ENCODE measurements at regions of chr12 and their contacts with region 1.

Region 1: DNA sequence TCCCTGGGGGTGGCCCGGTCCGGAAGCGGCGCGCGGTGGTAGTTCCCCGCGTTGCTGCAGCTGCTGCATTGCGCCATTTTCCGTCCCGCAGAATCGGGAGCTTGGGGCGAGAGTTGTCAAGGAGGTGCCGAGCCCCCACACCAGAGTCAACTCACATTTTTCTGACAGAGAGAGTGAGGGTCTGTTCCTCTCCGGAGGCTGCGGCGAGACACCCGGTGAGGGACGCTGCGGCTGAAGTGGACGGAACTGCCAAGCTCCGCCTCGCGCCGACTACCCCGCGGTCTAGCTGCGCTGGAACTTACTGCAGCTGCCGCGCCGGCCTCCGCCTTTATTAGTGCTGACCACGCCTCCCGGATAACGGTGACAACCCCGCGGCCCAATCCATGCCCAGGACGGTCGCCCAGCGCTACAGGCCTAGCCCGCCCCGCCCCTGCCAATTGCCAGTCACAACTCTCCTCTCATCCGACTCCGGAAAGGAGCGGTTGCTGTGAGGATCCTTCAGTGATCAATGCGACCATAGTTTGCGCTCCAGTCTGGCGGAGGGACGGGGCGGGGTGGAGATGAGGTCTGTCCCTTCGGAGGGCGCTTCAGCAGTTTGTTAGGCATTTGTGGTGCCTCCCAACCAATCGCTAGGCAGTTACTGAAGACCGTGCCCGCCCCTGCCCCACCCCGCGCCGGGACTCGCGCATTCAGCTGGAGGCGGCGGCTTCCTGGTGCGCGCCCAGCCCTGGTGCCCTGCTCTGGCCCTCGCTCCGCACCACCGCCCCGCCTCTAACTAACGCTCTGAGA is at the start of gene VAMP1:
- DNase-seq: peak; percentile 90 to 98 (median 95)
- ATAC-seq: peak; percentile 88
- H3K4me3 Mint-ChIP-seq: peak within 1 kb of the TSS; percentile 78 to 96 (median 92)
- H3K27ac Mint-ChIP-seq: peak within 1 kb of the TSS; percentile 82 to 98 (median 95)
- H3K4me1 Mint-ChIP-seq: peaks cover 30 to 54% (median 52%) of the 10 kb centered on the region in 4 donors
- H3K27me3 Mint-ChIP-seq: peaks cover 0 to 2% (median 0%) of the 10 kb centered on the region in 5 donors
- polyA plus RNA-seq, gene VAMP1: 9.7 to 13.6 (median 10.9) TPM

Region 2: GRCh38 chr12:6285063-6285477 is 185.5 kb before region 1 on chr12:
- POLR2A ChIA-PET with region 1: no interaction called
- DNase-seq: peak; percentile 41 to 80 (median 63)
- ATAC-seq: peak; percentile 77 to 96
- H3K4me3 Mint-ChIP-seq: no peak overlapping the region
- H3K27ac Mint-ChIP-seq: no peak overlapping the region
- H3K4me1 Mint-ChIP-seq: peaks cover 0 to 4% (median 3%) of the 10 kb centered on the region in 4 donors
- H3K27me3 Mint-ChIP-seq: peaks cover 4 to 29% (median 12%) of the 10 kb centered on the region in 5 donors

Region 3: GRCh38 chr12:6313326-6313940 is 157.1 kb before region 1 on chr12:
- POLR2A ChIA-PET with region 1: no interaction called
- DNase-seq: no peak
- ATAC-seq: no peak
- H3K4me3 Mint-ChIP-seq: no peak overlapping the region
- H3K27ac Mint-ChIP-seq: no peak overlapping the region
- H3K4me1 Mint-ChIP-seq: peaks cover 10 to 14% (median 11%) of the 10 kb centered on the region in 4 donors
- H3K27me3 Mint-ChIP-seq: peaks cover 2 to 14% (median 7%) of the 10 kb centered on the region in 5 donors

Region 4: DNA sequence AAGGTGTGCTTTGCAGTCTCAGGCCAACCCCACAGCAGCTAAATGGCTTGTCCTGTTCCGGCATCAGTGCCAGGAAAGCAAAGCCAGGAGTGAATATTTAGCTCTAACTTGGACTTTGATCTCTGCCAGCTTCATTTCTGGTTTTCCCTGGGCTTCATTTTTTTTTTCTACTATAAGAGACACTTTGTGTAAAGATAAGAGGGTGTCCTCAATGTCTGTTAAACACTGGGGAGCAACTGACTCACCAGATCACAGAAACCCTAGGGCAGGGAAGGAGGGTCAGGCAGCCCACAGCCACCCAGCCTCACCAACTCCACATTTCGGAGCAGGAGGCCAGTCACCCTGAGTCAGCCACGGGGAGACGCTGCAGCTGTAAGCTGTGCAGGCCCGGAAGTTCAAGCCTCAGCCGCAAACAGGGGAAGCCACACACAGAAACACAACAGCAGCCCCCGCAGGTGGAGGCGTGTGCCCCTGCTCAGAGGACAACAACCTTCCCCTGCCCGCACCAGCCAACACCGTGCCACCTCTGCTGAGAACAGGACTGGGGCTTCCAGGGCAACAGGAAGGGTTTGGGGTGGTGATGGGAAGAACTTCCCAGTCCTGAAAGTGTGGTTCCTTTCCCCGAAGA is 135.0 kb before region 1 on chr12:
- POLR2A ChIA-PET with region 1: interaction called, 62 read pairs
- DNase-seq: peak; percentile 64 to 93 (median 80)
- ATAC-seq: peak; percentile 74 to 80
- H3K4me3 Mint-ChIP-seq: no peak overlapping the region
- H3K27ac Mint-ChIP-seq: peak overlapping the region in 1 of 10 donors; percentile 81
- H3K4me1 Mint-ChIP-seq: peaks cover 36 to 59% (median 52%) of the 10 kb centered on the region in 4 donors
- H3K27me3 Mint-ChIP-seq: peaks cover 0 to 3% (median 0%) of the 10 kb centered on the region in 5 donors

Region 5: DNA sequence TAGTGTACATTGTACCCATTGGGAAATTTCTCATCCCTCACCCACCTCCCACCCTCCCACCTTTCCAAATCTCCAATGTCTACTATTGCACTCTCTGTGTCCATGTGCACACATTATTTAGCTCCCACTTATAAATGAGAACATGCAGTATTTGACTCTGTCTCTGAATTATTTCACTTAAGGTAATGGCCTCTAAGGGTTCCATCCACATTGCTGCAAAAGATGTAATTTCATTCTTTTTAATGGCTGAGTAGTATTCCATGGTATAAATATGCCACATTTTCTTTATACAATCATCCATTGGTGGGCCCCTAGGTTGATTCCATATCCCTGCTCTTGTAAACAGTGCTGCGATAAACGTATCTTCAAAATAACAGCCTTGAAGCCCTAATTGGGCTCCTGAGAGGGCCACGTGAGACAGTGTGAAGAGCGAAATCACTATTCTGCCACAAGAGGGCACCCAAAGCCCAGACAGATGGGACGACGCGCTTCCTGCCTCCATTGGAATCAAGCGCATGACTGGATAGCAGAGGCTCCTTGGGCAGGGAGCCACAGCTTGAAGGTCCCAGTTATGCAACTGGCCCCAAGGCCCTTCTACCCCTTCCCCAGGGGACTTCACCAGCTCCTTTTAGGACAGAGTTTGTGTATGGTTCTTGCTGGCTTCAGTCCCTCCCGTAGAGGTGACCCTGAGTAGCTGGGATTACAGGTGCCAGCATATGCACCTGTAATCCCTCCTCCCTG is 47.1 kb before region 1 on chr12:
- POLR2A ChIA-PET with region 1: interaction called, 248 read pairs
- DNase-seq: peak; percentile 45 to 91 (median 76)
- ATAC-seq: peak; percentile 62 to 71
- H3K4me3 Mint-ChIP-seq: peak overlapping the region in 7 of 10 donors; percentile 0 to 55 (median 25)
- H3K27ac Mint-ChIP-seq: peak overlapping the region; percentile 71 to 93 (median 87)
- H3K4me1 Mint-ChIP-seq: peaks cover 20 to 46% (median 38%) of the 10 kb centered on the region in 4 donors
- H3K27me3 Mint-ChIP-seq: no peaks in the 10 kb centered on the region

Region 6: DNA sequence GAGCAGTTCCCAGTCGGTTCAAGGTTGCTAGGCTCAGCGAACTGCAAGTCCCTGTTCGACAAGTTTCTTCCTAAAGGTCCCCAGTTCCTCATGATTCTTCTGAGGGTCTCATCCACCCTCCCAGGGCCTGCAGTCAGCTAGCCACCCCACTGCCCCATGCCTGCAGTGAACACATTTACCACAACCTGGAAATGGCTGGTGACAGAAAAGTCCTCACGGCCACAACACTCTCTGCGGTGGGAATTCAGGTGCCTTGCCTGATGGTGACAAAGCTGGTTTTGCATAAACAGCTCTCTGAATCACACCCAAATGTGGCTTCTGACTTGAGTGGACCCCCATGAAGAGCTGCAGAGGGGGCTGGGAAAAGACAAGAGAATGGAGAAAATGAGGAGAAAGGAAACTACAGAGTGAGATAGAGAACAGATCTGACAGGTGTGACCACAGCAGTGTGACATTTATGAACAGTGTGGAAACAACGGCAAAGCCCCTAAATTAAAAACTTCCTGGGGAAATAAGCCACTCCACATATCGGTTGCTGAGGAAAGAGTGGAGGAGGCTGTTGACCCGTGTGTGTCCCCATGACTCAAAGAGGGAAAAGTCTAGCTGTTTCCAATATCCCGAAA is 27.1 kb before region 1 on chr12:
- POLR2A ChIA-PET with region 1: interaction called, 1,074 read pairs
- DNase-seq: no peak
- ATAC-seq: peak in 1 of 2 donors; percentile 27
- H3K4me3 Mint-ChIP-seq: peak overlapping the region; percentile 84 to 100 (median 99)
- H3K27ac Mint-ChIP-seq: peak overlapping the region; percentile 87 to 99 (median 96)
- H3K4me1 Mint-ChIP-seq: peaks cover 40 to 70% (median 60%) of the 10 kb centered on the region in 4 donors
- H3K27me3 Mint-ChIP-seq: no peaks in the 10 kb centered on the region

Region 7: GRCh38 chr12:6493497-6494257 is 23.1 kb after region 1 on chr12 and contains the start of gene NCAPD2:
- POLR2A ChIA-PET with region 1: interaction called, 104 read pairs
- DNase-seq: peak; percentile 89 to 97 (median 95)
- ATAC-seq: peak; percentile 83 to 87
- H3K4me3 Mint-ChIP-seq: peak within 1 kb of the TSS; percentile 91 to 99 (median 98)
- H3K27ac Mint-ChIP-seq: peak within 1 kb of the TSS; percentile 94 to 100 (median 97)
- H3K4me1 Mint-ChIP-seq: peaks cover 15 to 50% (median 37%) of the 10 kb centered on the region in 4 donors
- H3K27me3 Mint-ChIP-seq: no peaks in the 10 kb centered on the region
- polyA plus RNA-seq, gene NCAPD2: 24.7 to 45.3 (median 28.1) TPM

Region 8: GRCh38 chr12:6524648-6525047 is 54.1 kb after region 1 on chr12:
- POLR2A ChIA-PET with region 1: no interaction called
- DNase-seq: no peak
- ATAC-seq: no peak
- H3K4me3 Mint-ChIP-seq: no peak overlapping the region
- H3K27ac Mint-ChIP-seq: peak overlapping the region in 2 of 10 donors; percentile 11 to 43
- H3K4me1 Mint-ChIP-seq: peaks cover 0 to 3% (median 0%) of the 10 kb centered on the region in 4 donors
- H3K27me3 Mint-ChIP-seq: no peaks in the 10 kb centered on the region

Region 9: DNA sequence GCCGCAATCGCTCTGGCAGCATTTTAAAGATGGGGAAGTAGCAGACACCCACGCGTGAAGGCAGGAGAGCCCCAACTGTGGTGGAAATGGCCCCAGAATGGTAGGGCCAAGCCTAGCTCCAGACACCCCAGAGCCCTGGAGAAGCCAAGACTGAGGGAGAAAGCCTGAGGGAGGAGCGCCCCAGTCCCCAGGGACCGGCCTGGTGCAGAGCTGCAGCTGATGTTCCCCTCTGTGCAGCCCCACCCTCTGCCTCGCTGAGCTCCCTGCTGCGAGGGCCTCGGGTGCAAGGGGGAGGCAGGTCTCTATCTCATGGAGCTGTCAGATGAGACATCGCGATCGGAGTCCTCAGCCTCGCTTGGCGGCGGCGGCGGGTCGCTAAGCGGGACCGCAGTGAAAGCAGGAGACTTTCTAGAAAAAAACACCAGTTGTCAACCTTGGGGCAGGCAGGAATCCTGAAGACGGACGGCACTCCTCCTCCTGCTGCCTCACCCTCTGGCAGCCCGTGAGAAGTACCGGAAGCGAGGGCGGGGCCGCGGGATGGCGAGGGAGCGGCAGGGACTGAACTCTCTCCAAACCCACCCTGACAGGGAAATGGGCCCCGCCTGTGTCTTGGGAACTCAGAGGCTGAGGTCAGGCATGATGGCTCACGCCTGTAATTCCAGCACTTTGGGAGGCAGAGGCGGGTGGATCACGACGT is 69.8 kb after region 1 on chr12:
- POLR2A ChIA-PET with region 1: interaction called, 100 read pairs
- DNase-seq: peak in 5 of 10 donors; percentile 21 to 63 (median 41)
- ATAC-seq: peak; percentile 48 to 51
- H3K4me3 Mint-ChIP-seq: peak overlapping the region; percentile 65 to 86 (median 80)
- H3K27ac Mint-ChIP-seq: peak overlapping the region; percentile 66 to 93 (median 76)
- H3K4me1 Mint-ChIP-seq: peaks cover 14 to 55% (median 44%) of the 10 kb centered on the region in 4 donors
- H3K27me3 Mint-ChIP-seq: no peaks in the 10 kb centered on the region

Region 10: GRCh38 chr12:6723607-6724396 is 253.2 kb after region 1 on chr12 and contains the start of gene COPS7A:
- POLR2A ChIA-PET with region 1: no interaction called
- DNase-seq: peak; percentile 73 to 98 (median 92)
- ATAC-seq: peak; percentile 85 to 90
- H3K4me3 Mint-ChIP-seq: peak within 1 kb of the TSS; percentile 74 to 99 (median 93)
- H3K27ac Mint-ChIP-seq: peak within 1 kb of the TSS; percentile 92 to 98 (median 96)
- H3K4me1 Mint-ChIP-seq: peaks cover 19 to 32% (median 24%) of the 10 kb centered on the region in 4 donors
- H3K27me3 Mint-ChIP-seq: no peaks in the 10 kb centered on the region
- polyA plus RNA-seq, gene COPS7A: 34.9 to 42.4 (median 36.2) TPM